ENCODE measurements at regions of chr18 and their contacts with region 1.

Region 1: GRCh38 chr18:11310476-11311086 is 161.2 kb upstream of the PIEZO2 start:
- DNase-seq: peak; percentile 22
- ATAC-seq: peak; percentile 95
- H3K4me3 ChIP-seq: no peak overlapping the region
- H3K27ac ChIP-seq: no peak overlapping the region
- H3K4me1 ChIP-seq: no peaks in the 10 kb centered on the region
- H3K27me3 ChIP-seq: peaks cover 16% of the 10 kb centered on the region; the same call in 1 of the 2 replicates
- CTCF ChIP-seq: peak; percentile 50 to 91 (median 83); a peak in 5 of 6 replicates
- POLR2A ChIP-seq: no peak
- RAD21 ChIP-seq: peak; percentile 44

Region 2: GRCh38 chr18:11178951-11179549 is 131.5 kb before region 1 on chr18:
- CTCF ChIA-PET with region 1: no interaction called
- POLR2A ChIA-PET with region 1: no interaction called
- RAD21 ChIA-PET with region 1: no interaction called
- intact Hi-C with region 1: no loop called
- DNase-seq: no peak
- ATAC-seq: no peak
- H3K4me3 ChIP-seq: no peak overlapping the region
- H3K27ac ChIP-seq: no peak overlapping the region
- H3K4me1 ChIP-seq: no peaks in the 10 kb centered on the region
- H3K27me3 ChIP-seq: 0 out of 2 replicates have a peak, but pooled peaks cover 10% of the 10 kb centered on the region
- CTCF ChIP-seq: no peak
- POLR2A ChIP-seq: no peak
- RAD21 ChIP-seq: no peak

Region 3: DNA sequence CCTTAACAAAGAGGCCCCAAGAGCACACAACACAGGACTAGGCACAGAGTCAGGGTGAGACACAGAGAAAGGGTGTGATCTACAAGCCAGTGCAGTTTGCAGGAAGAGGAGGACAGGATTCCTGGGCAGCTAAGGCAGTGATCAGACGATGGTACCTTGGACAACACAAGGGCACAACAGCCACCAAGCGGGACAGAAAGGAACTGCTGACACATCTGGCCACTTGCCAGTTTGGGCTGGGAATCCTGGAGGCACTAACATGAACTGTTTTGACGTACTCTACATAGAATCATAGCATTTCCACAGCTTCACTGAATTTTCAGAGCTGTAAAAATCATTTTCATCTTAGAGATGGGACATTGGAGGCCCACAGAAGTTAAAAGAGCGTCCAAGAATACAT is 77.3 kb after region 1 on chr18:
- CTCF ChIA-PET with region 1: interaction called, 8 read pairs
- POLR2A ChIA-PET with region 1: no interaction called
- RAD21 ChIA-PET with region 1: no interaction called
- intact Hi-C with region 1: loop called (anchors 2 kb)
- DNase-seq: peak; percentile 70
- ATAC-seq: peak; percentile 88
- H3K4me3 ChIP-seq: no peak overlapping the region
- H3K27ac ChIP-seq: no peak overlapping the region
- H3K4me1 ChIP-seq: no peaks in the 10 kb centered on the region
- H3K27me3 ChIP-seq: peaks cover 45% of the 10 kb centered on the region
- CTCF ChIP-seq: peak in 2 of 3 experiments; percentile 54 to 65; a peak in 4 of 6 replicates
- POLR2A ChIP-seq: no peak
- RAD21 ChIP-seq: peak; percentile 38

Region 4: DNA sequence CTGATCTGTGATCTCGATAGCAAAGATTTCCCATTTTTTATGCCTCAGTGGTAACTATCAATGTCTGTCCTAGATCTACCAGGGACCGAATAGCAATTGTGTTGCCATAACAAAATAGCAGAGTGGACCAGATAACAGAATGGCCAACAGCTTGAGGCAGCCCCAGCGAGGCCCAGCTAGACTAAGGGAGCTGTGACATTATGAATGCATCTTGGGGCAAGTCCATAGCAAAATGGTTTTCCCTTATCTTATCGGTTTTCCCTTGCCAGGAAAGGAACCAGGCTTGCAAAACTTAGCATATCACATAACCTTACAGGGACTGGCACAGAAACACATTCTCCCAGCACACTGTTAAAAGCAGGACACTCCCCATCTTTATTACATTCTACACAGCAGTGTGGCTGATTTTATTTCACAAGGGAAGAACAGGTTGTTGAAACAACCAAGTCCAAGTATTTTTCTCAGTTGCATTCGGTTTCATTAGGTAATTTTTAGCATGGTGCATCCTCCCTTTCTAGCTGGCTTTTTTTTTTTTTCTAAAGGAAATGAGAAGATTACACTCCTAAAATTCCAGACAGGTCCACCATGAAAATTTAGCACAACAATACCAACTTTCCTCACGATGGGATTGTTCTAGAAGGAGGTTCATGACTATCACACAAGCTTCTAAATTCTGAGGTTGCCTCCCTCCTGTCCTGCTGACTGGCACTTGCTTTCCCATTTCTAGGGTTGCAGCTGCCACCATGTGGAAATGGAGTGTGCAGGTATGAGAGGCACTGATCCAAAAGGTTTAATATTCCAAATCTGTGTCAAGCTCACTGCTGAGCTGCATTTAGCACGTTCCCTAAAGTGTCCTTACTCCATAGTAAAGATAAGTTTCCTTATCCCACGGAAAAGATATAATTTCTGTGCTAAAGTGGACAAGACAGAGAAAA is 201.8 kb after region 1 on chr18:
- CTCF ChIA-PET with region 1: interaction called, 47 read pairs
- POLR2A ChIA-PET with region 1: no interaction called
- RAD21 ChIA-PET with region 1: interaction called, 4 to 7 read pairs
- intact Hi-C with region 1: loop called (anchors 2 kb)
- DNase-seq: no peak
- ATAC-seq: peak; percentile 79
- H3K4me3 ChIP-seq: no peak overlapping the region
- H3K27ac ChIP-seq: no peak overlapping the region
- H3K4me1 ChIP-seq: no peaks in the 10 kb centered on the region
- H3K27me3 ChIP-seq: peaks cover 29% of the 10 kb centered on the region; the same call in 1 of the 2 replicates
- CTCF ChIP-seq: peak in 2 of 3 experiments; percentile 27 to 28; a peak in 2 of 6 replicates
- POLR2A ChIP-seq: no peak
- RAD21 ChIP-seq: peak; percentile 65

Region 5: DNA sequence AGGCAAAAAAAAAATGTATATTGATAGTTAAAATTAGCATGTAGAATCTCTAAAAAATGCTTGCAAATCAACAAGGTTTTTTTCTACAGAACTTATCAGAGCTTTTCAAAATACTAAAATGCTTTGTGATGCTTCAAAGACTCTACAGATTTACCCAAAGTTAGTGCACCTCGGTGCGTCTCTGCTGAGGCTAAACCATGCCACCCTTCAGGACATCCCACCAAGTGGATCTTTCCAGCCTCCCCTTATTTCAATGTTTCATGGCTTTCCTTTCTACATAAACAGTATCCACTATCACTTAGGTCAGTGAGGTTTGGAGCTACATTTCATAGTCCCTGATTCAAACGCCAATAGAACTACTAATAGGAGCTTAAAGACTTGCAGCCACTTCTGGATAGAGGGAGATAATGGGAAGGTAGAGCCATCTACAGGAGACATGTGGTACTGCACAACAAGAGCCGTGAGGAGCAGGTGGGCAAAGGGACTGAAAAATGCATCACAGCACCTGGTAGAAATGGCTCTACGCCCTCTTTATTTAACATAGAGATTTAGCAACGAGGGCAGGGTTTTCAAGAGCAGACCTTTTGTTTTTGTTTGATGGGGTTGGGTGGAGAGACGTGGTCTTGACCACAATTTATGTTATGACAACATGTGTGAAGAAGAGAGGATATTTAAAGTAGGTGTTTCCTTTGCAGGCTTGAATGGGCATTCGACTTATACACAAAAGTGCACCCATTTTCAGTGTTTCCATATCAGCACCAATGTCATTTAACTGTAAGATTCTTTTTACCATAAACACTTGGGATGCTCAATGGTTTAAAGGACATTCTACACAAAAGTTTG is 242.7 kb after region 1 on chr18:
- CTCF ChIA-PET with region 1: interaction called, 33 read pairs
- POLR2A ChIA-PET with region 1: no interaction called
- RAD21 ChIA-PET with region 1: interaction called, 5 to 7 read pairs
- intact Hi-C with region 1: loop called (anchors 1 kb)
- DNase-seq: peak; percentile 45
- ATAC-seq: peak; percentile 91
- H3K4me3 ChIP-seq: no peak overlapping the region
- H3K27ac ChIP-seq: no peak overlapping the region
- H3K4me1 ChIP-seq: no peaks in the 10 kb centered on the region
- H3K27me3 ChIP-seq: peaks cover 51% of the 10 kb centered on the region
- CTCF ChIP-seq: peak; percentile 45 to 91 (median 88); a peak in 5 of 6 replicates
- POLR2A ChIP-seq: no peak
- RAD21 ChIP-seq: peak; percentile 68

Region 6: DNA sequence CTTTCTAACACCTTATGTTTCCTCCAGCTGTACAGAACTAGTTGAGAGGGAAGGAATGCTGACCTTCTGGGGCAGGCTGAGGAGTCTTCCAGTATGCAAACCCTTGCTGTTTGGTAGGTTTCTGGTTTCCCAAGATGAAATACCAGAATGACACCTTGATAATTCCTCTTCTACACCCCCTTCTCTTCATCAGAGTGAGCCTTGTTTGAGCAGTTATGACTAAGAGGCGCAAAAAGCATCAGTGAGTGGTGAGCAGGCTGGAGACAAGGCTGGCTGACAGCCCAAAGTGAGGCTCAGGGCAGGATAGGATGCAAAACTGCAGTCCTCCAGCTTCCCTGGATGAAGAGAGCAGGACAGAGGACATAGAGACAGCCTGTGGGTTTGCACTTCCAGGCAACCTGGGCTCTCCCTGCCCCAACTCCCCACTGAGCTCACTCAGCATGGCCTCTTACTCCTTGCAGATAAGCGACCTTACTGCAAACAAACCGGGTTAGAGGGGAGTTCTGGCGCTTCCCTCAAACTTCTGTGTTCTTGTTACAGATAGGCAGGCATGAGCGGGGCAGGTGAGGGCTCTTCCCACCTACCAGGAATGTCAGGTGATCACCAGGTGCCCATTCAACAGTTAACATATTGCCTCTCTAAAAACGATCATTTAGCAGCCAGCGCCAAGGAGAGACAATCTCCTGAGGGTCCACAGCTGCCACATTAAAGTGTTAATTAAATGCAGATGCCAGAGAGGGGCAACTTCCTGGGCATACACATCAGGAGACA is 592.1 kb after region 1 on chr18:
- CTCF ChIA-PET with region 1: no interaction called
- POLR2A ChIA-PET with region 1: no interaction called
- RAD21 ChIA-PET with region 1: no interaction called
- intact Hi-C with region 1: no loop called
- DNase-seq: no peak
- ATAC-seq: no peak
- H3K4me3 ChIP-seq: no peak overlapping the region
- H3K27ac ChIP-seq: no peak overlapping the region
- H3K4me1 ChIP-seq: peaks cover 4 to 5% of the 10 kb centered on the region in 2 experiments; a peak in 3 of 4 replicates
- H3K27me3 ChIP-seq: no peaks in the 10 kb centered on the region
- CTCF ChIP-seq: no peak
- POLR2A ChIP-seq: no peak
- RAD21 ChIP-seq: no peak

Measured in HCT116 (cell line).